ENCODE measurements at regions of chr1 and their contacts with region 1.

Region 1: DNA sequence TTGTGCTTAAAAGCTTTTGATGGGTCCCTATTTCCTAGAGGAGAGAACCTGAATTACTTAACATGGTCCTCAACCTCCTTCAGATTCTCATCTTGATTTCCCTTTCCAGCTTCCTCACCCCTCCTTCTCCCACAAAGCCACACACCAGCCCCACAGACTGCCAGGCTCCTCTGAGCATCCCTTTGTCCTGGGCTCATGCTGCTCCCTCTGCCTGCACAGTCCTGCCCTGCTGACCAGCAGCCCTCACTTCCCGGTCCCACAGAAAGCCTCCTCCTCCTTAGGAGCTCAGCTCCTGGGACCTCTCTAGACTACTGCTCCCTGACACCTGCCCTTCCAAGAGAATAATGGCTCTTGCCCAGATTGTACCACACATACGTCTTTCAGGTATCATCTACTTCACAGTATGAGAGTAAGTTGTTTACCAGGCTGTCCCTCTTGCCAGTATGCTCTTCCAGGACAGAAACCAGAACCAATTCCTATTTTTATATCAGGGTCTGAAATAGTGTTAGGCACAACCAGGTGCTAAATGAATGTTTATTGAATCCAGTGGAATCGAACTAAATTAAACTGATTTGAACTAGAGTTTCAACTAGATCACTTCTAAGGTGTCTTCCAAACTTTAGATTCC is 373.4 kb downstream of the LMX1A start:
- DNase-seq: no peak
- ATAC-seq: no peak
- H3K4me3 ChIP-seq: no peak overlapping the region
- H3K4me3 Mint-ChIP-seq: no peak overlapping the region
- H3K27ac ChIP-seq: no peak overlapping the region
- H3K27ac Mint-ChIP-seq: no peak overlapping the region
- H3K4me1 ChIP-seq: no peaks in the 10 kb centered on the region
- H3K4me1 Mint-ChIP-seq: no peaks in the 10 kb centered on the region
- H3K27me3 ChIP-seq: no peaks in the 10 kb centered on the region
- H3K27me3 Mint-ChIP-seq: no peaks in the 10 kb centered on the region
- CTCF ChIP-seq: no peak

Region 2: DNA sequence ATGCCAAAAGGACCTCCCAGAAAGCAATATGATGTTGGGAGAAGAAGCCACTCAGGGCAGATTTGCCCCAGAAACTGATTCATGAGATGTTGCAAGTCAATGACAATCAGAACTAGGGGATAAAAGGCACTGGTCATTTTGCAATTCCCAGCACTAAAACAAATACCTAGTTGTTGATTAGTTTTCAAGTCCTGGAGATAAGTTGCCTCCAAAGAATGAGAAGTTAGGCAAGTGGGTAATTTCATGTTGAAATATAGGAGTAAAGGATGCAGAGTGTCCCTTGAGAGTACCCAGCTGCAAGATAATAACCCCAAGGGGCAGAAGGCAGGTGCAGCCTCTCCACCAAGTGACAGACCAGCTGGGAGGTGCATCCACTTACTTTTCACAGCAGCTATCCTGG is 60.6 kb before region 1 on chr1:
- intact Hi-C with region 1: loop called (anchors 10 kb)
- DNase-seq: no peak
- ATAC-seq: no peak
- H3K4me3 ChIP-seq: no peak overlapping the region
- H3K4me3 Mint-ChIP-seq: no peak overlapping the region
- H3K27ac ChIP-seq: no peak overlapping the region
- H3K27ac Mint-ChIP-seq: no peak overlapping the region
- H3K4me1 ChIP-seq: no peaks in the 10 kb centered on the region
- H3K4me1 Mint-ChIP-seq: no peaks in the 10 kb centered on the region
- H3K27me3 ChIP-seq: no peaks in the 10 kb centered on the region
- H3K27me3 Mint-ChIP-seq: no peaks in the 10 kb centered on the region
- CTCF ChIP-seq: no peak

Region 3: DNA sequence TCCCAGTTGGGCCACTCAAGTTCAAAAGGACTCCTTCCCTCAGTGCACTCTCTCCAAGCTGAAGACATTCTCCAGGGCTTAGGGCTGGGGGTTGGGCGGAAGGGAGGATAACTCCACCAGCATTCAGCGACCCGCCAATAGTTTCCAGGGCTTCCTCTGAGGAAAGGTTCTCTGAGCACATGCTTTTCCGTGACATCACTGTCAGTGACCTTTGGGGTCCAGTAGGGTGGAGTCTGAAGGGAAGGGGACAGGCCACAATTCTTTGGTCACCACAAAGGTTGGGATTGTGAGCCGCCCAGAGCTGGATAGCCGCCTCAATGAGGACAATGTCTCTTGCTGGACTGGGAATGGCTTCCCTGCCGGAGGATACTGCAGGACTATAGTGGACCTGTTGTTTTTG is 484.6 kb after region 1 on chr1:
- intact Hi-C with region 1: no loop called
- DNase-seq: no peak
- ATAC-seq: no peak
- H3K4me3 ChIP-seq: no peak overlapping the region
- H3K4me3 Mint-ChIP-seq: no peak overlapping the region
- H3K27ac ChIP-seq: no peak overlapping the region
- H3K27ac Mint-ChIP-seq: no peak overlapping the region
- H3K4me1 ChIP-seq: no peaks in the 10 kb centered on the region
- H3K4me1 Mint-ChIP-seq: no peaks in the 10 kb centered on the region
- H3K27me3 ChIP-seq: peaks cover 2% of the 10 kb centered on the region
- H3K27me3 Mint-ChIP-seq: peaks cover 10 to 22% of the 10 kb centered on the region in 2 donors
- CTCF ChIP-seq: no peak